CD4-positive, alpha-beta memory T cell (primary cell): ENCODE measurements at regions of chr1 and their contacts with region 1.

Region 1: DNA sequence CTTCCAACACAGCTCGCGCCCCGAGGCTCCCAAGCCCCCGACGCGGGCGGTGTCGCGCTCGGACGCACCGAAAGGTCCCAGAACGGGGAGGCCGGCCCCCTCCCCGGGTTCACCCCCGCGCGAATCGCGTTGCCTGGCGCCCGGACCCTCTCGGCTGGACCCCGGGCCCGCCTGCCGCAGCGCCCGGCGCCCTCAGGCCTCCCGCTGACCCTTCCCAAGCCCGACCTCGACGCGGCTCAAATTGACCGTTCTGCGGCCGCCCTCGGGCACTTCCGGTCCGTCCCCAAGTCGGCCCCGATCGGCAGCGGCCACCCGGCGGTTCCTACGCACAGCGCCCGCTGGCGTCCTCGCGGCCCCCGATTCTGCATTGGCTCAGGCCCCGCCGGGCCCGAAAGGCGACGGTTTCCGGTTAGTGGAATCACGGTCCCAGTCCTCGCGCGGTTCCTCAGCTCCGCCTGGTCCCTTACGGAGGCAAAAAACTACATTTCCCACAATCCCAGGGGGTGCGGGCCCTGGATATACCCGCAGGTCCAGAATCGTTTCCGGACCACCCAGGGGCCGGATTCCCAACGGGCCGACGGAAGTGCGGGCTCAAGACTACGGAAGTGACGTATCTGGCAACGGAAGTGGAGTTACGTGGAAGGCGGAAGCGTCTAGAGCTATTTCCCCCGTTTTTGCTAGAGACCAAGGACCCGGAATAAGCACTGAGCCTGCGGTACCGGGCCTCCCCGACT is at the start of gene AURKAIP1:
- DNase-seq: peak; percentile 95 to 98 (median 97)
- H3K4me3 ChIP-seq: peak within 1 kb of the TSS; percentile 42 to 73
- H3K4me3 Mint-ChIP-seq: peak within 1 kb of the TSS; percentile 86 to 96 (median 92)
- H3K27ac ChIP-seq: peak within 1 kb of the TSS; percentile 88
- H3K27ac Mint-ChIP-seq: peak within 1 kb of the TSS in 6 of 7 donors; percentile 93 to 99 (median 98)
- H3K4me1 ChIP-seq: peaks cover 46% of the 10 kb centered on the region
- H3K4me1 Mint-ChIP-seq: peaks cover 6 to 44% (median 26%) of the 10 kb centered on the region in 4 donors
- H3K27me3 ChIP-seq: no peaks in the 10 kb centered on the region
- H3K27me3 Mint-ChIP-seq: no peaks in the 10 kb centered on the region
- total RNA-seq, gene AURKAIP1: 60.4 to 72.7 TPM

Region 2: DNA sequence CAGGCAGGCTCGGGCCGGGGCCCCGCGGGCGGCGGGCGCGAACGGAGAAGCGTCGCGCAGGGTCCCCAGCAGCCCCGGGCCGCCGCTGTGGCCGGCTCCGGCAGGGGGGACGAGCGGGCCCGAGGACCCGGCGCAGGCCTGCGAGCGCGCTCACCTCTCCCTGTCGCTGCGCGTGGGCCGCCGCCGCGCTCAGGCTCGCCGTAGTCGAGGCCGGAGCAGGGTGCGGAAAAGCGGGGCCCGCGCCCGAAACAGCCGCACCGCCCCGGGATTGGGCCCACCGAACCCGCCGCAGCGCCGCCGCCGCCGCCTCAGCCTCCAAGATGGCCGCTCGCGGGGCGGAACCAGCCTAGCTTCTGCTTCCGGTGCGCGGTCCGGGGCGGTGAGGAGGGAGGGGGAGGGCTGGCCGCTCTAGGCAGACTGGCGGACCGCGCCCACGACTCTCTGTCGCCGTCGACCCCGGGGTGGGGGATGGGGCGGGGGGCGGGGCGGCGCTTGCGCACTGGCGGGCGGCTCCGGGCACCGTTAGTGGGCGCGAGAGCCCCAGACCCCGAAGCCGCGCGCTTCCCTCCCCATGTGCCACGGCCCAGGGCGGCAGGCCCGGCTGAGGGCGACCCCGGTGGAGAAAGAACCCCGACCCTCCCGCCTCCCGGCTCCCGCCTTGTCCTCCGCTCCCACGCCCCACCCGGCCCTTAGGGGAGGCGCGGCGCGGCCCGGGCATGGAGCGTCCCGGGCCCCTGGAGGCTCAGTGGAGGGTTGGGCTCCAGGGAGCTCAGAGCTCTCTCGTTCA is 101.4 kb before region 1 on chr1 and contains the start of gene UBE2J2:
- CTCF ChIA-PET with region 1: interaction called, 3 read pairs
- POLR2A ChIA-PET with region 1: interaction called, 10 read pairs
- intact Hi-C with region 1: no loop called
- DNase-seq: peak; percentile 89 to 92 (median 90)
- H3K4me3 ChIP-seq: peak within 1 kb of the TSS; percentile 33 to 80
- H3K4me3 Mint-ChIP-seq: peak within 1 kb of the TSS; percentile 86 to 88 (median 87)
- H3K27ac ChIP-seq: peak within 1 kb of the TSS; percentile 83
- H3K27ac Mint-ChIP-seq: peak within 1 kb of the TSS; percentile 83 to 96 (median 89)
- H3K4me1 ChIP-seq: peaks cover 43% of the 10 kb centered on the region
- H3K4me1 Mint-ChIP-seq: peaks cover 22 to 40% (median 32%) of the 10 kb centered on the region in 4 donors
- H3K27me3 ChIP-seq: no peaks in the 10 kb centered on the region
- H3K27me3 Mint-ChIP-seq: no peaks in the 10 kb centered on the region
- total RNA-seq, gene UBE2J2: 82.8 to 92.9 TPM

Region 3: DNA sequence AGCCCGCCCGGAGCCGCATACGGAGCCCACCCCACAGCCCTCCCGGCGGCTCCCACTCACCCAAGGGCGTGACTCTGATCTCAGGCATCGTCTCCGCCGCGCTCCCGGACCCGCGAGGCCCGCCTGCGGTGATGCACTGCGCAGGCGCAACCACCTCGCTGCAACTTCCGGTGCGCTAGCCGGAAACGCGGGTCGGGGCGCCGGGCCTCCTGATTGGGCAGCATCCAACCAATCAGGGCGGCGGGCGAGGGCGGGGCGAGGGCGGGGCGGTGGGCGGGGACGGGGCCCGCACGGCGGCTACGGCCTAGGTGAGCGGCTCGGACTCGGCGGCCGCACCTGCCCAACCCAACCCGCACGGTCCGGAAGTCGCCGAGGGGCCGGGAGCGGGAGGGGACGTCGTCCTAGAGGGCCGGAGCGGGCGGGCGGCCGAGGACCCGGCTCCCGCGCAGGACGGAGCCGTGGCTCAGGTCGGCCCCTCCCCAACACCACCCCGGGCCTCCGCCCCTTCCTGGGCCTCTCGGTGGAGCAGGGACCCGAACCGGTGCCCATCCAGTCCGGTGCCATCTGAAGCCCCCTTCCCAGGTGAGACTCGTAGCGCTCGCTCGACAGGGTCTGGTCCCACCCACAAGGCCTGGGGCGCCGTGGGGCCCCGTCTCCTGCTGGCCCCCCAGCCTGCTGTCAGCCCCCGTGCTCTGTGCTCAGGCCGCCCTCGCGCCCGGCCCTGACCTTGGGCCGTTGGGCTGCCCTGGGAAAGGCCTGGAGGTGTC is 50.4 kb before region 1 on chr1 and contains the starts of genes CPTP and INTS11:
- CTCF ChIA-PET with region 1: interaction called, 4 read pairs
- POLR2A ChIA-PET with region 1: interaction called, 5 read pairs
- intact Hi-C with region 1: loop called (anchors 2 kb)
- DNase-seq: peak; percentile 95 to 96 (median 96)
- H3K4me3 ChIP-seq: peak within 1 kb of the TSS; percentile 49 to 77
- H3K4me3 Mint-ChIP-seq: peak within 1 kb of the TSS; percentile 87 to 97 (median 93)
- H3K27ac ChIP-seq: peak within 1 kb of the TSS; percentile 89
- H3K27ac Mint-ChIP-seq: peak within 1 kb of the TSS; percentile 77 to 97 (median 91)
- H3K4me1 ChIP-seq: peaks cover 41% of the 10 kb centered on the region
- H3K4me1 Mint-ChIP-seq: peaks cover 9 to 53% (median 34%) of the 10 kb centered on the region in 4 donors
- H3K27me3 ChIP-seq: no peaks in the 10 kb centered on the region
- H3K27me3 Mint-ChIP-seq: no peaks in the 10 kb centered on the region
- total RNA-seq, gene CPTP: 25.0 to 28.3 TPM
- total RNA-seq, gene INTS11: 163 to 173 TPM

Region 4: GRCh38 chr1:1399187-1399871 is 24.2 kb after region 1 on chr1 and contains the start of gene CCNL2:
- CTCF ChIA-PET with region 1: interaction called, 11 read pairs
- POLR2A ChIA-PET with region 1: interaction called, 149 read pairs
- intact Hi-C with region 1: loop called (anchors 1 kb)
- DNase-seq: peak; percentile 98 to 99 (median 99)
- H3K4me3 ChIP-seq: peak within 1 kb of the TSS; percentile 92
- H3K4me3 Mint-ChIP-seq: peak within 1 kb of the TSS; percentile 89 to 94 (median 92)
- H3K27ac ChIP-seq: peak within 1 kb of the TSS; percentile 85
- H3K27ac Mint-ChIP-seq: peak within 1 kb of the TSS; percentile 89 to 96 (median 94)
- H3K4me1 ChIP-seq: peaks cover 36% of the 10 kb centered on the region
- H3K4me1 Mint-ChIP-seq: peaks cover 17 to 63% (median 41%) of the 10 kb centered on the region in 4 donors
- H3K27me3 ChIP-seq: no peaks in the 10 kb centered on the region
- H3K27me3 Mint-ChIP-seq: no peaks in the 10 kb centered on the region
- total RNA-seq, gene CCNL2: 388 to 394 TPM

Region 5: GRCh38 chr1:1615256-1616044 is 240.4 kb after region 1 on chr1 and contains the start of gene MIB2:
- CTCF ChIA-PET with region 1: interaction called, 3 read pairs
- POLR2A ChIA-PET with region 1: interaction called, 7 read pairs
- intact Hi-C with region 1: loop called (anchors 1 kb)
- DNase-seq: peak; percentile 98 to 99 (median 99)
- H3K4me3 ChIP-seq: peak within 1 kb of the TSS; percentile 73 to 89
- H3K4me3 Mint-ChIP-seq: peak within 1 kb of the TSS; percentile 89 to 97 (median 94)
- H3K27ac ChIP-seq: peak within 1 kb of the TSS; percentile 100
- H3K27ac Mint-ChIP-seq: peak within 1 kb of the TSS; percentile 98 to 100 (median 99)
- H3K4me1 ChIP-seq: peaks cover 29% of the 10 kb centered on the region
- H3K4me1 Mint-ChIP-seq: peaks cover 10 to 38% (median 26%) of the 10 kb centered on the region in 4 donors
- H3K27me3 ChIP-seq: no peaks in the 10 kb centered on the region
- H3K27me3 Mint-ChIP-seq: no peaks in the 10 kb centered on the region
- total RNA-seq, gene MIB2: 112 to 114 TPM